ENCODE measurements at regions of chr9 and their contacts with region 1.

Region 1: DNA sequence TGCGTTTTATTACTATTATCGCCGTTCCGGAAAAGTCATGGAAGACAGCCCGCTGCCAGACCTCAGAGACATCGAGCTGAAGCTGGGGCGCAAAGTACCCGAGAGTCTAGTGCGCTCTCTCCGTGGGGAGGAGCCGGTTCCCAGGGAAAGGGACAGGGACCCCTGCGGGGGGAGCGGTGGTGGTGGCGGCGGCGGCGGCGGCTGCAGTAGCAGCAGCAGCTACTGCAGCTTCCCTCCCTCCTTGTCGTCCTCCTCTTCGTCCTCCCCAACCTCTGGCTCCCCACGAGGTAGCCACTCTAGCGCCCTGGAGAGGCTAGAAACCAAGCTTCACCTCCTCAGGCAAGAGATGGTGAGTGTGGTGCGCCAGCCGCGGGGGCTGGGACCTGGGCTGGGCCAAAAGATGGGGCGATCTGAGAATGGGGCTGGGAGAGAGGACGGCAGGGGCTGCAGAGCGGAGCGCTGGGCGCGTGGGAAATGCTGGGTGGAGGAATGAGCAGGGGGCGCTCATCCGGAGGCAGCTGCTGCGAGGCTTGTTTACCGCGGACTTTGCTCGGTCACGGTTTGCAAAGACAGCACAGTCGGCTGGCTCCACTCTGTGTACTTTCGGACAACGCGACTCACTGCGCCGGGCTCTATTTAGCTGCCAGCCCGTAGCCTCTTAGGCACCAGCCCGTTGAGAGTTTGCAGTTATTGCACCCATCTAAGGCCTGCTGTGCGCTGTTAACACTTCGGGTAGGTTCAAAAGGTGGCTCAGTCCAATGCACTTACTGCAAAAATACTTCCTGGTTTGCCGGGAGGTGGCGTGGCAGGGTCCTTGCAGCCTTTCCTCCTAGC is 1.1 kb downstream of the LURAP1L start:
- DNase-seq: no peak
- H3K4me3 ChIP-seq: peak overlapping the region; percentile 76 to 89 (median 83)
- H3K27ac ChIP-seq: peak overlapping the region; percentile 86 to 94 (median 90)
- H3K4me1 ChIP-seq: peaks cover 5 to 47% (median 38%) of the 10 kb centered on the region in 4 donors
- H3K27me3 ChIP-seq: no peaks in the 10 kb centered on the region
- CTCF ChIP-seq: peak; percentile 54 to 60 (median 58)
- EP300 ChIP-seq: no peak
- POLR2A ChIP-seq: no peak

Region 2: GRCh38 chr9:13071921-13072320 is 296.0 kb after region 1 on chr9:
- intact Hi-C with region 1: no loop called
- DNase-seq: no peak
- H3K4me3 ChIP-seq: no peak overlapping the region
- H3K27ac ChIP-seq: no peak overlapping the region
- H3K4me1 ChIP-seq: no peaks in the 10 kb centered on the region
- H3K27me3 ChIP-seq: no peaks in the 10 kb centered on the region
- CTCF ChIP-seq: no peak
- EP300 ChIP-seq: no peak
- POLR2A ChIP-seq: no peak

Region 3: DNA sequence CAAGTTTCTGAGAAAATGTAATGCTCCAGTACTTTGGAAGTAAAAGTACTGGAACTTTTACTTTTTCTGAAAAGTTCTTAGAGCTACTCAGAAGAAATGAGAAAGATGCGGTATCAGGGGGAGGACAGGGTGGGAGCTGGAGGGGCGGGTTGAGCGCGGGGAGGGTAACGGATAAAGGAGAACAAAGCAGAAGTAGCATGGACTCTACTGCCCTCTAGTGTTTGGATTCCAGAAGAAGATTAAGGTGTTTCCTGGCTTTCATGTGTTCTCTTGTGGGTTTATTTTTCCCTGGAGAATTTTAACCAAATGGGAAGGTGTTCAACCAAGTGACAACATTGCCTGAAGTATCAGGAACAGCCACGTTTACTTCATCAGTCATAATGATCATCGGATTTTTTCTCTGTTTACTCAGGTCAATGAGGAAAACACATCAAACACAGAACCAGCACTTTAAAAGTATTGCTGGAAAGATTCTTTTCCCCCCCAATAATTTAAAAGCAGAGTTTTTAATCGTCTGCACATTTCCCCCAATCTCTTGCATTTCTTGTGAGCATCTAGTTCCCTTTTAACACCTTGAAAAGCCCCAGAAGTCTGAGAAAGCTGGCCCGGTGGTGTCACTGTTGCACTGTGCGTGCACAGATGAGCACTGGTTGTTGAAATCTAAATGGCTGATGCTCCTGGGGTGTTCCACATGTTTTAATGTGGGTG is 313.0 kb after region 1 on chr9:
- intact Hi-C with region 1: loop called (anchors 10 kb)
- DNase-seq: no peak
- H3K4me3 ChIP-seq: peak overlapping the region in 2 of 4 donors; percentile 3 to 23
- H3K27ac ChIP-seq: no peak overlapping the region
- H3K4me1 ChIP-seq: peaks cover 0 to 22% (median 8%) of the 10 kb centered on the region in 4 donors
- H3K27me3 ChIP-seq: no peaks in the 10 kb centered on the region
- CTCF ChIP-seq: peak; percentile 54 to 74 (median 74)
- EP300 ChIP-seq: no peak
- POLR2A ChIP-seq: no peak

Measured in esophagus muscularis mucosa (tissue), 4 donors.